Common myeloid progenitor, CD34-positive (primary cell): ENCODE measurements at regions of chr1 and their contacts with region 1.

Region 1: GRCh38 chr1:84264961-84265360 is 36.5 kb upstream of the SAMD13 start:
- DNase-seq: no peak
- H3K4me3 ChIP-seq: no peak overlapping the region
- H3K27ac ChIP-seq: no peak overlapping the region
- H3K4me1 ChIP-seq: no peaks in the 10 kb centered on the region
- H3K27me3 ChIP-seq: no peaks in the 10 kb centered on the region

Region 2: DNA sequence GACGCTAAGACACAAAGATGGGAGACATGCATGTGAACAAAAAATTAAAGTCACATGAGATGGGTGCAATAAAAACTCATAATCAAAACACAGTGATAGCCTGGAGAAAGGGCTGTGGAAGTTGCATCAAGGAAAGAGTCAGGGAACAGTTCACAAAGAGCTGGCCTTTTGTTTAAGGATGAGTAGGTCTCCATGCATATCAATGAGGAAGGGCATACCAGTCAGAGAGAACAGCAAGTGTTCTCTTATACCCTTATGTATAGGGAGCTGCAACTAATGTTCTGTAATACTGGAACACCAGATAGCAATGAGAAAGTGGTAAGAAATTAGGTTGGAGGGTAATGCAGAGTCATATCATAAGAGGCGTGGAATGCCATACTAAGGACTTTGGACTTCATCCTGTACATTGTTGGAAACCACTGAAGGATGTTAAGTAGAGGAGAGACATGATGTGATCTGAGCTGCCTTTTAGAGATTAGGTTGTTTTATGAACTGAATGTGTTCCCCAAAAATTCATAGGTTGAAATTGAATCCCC is 10.2 kb before region 1 on chr1:
- CTCF ChIA-PET with region 1: interaction called, 12 read pairs
- POLR2A ChIA-PET with region 1: no interaction called
- DNase-seq: no peak
- H3K4me3 ChIP-seq: no peak overlapping the region
- H3K27ac ChIP-seq: no peak overlapping the region
- H3K4me1 ChIP-seq: no peaks in the 10 kb centered on the region
- H3K27me3 ChIP-seq: no peaks in the 10 kb centered on the region